CD4-positive, alpha-beta T cell (primary cell): ENCODE measurements at regions of chr12 and their contacts with region 1.

Region 1: GRCh38 chr12:68358532-68359485 is 26.6 kb upstream of the MDM1 start:
- DNase-seq: peak; percentile 36 to 84 (median 55)
- ATAC-seq: peak; percentile 92
- H3K4me3 ChIP-seq: no peak overlapping the region
- H3K4me3 Mint-ChIP-seq: no peak overlapping the region
- H3K27ac ChIP-seq: no peak overlapping the region
- H3K27ac Mint-ChIP-seq: peak overlapping the region; percentile 67
- H3K4me1 ChIP-seq: peaks cover 21% of the 10 kb centered on the region
- H3K4me1 Mint-ChIP-seq: peaks cover 29% of the 10 kb centered on the region
- H3K27me3 ChIP-seq: no peaks in the 10 kb centered on the region
- H3K27me3 Mint-ChIP-seq: no peaks in the 10 kb centered on the region
- CTCF ChIP-seq: peak; percentile 72

Region 2: DNA sequence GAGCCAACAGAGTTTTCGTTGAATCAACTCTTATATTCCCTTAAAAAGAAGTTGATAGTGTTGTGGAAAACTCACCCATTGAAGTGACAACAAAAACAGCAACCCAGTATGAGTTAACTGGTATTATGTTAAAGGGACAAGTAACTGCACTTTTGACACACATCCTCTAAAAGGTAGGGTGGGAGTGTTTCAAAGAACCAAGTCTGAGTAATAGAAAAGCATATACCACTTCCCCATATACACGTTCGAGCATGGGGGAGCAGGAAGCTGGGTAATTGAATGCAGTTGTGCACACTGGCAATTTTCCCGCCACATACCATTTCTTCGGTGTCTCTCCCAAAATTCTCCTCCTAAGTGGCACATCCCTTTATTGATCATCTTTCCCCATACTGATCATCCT is 338.1 kb before region 1 on chr12:
- CTCF ChIA-PET with region 1: no interaction called
- POLR2A ChIA-PET with region 1: no interaction called
- intact Hi-C with region 1: no loop called
- DNase-seq: no peak
- ATAC-seq: no peak
- H3K4me3 ChIP-seq: no peak overlapping the region
- H3K4me3 Mint-ChIP-seq: no peak overlapping the region
- H3K27ac ChIP-seq: no peak overlapping the region
- H3K27ac Mint-ChIP-seq: no peak overlapping the region
- H3K4me1 ChIP-seq: no peaks in the 10 kb centered on the region
- H3K4me1 Mint-ChIP-seq: no peaks in the 10 kb centered on the region
- H3K27me3 ChIP-seq: no peaks in the 10 kb centered on the region
- H3K27me3 Mint-ChIP-seq: no peaks in the 10 kb centered on the region
- CTCF ChIP-seq: no peak

Region 3: DNA sequence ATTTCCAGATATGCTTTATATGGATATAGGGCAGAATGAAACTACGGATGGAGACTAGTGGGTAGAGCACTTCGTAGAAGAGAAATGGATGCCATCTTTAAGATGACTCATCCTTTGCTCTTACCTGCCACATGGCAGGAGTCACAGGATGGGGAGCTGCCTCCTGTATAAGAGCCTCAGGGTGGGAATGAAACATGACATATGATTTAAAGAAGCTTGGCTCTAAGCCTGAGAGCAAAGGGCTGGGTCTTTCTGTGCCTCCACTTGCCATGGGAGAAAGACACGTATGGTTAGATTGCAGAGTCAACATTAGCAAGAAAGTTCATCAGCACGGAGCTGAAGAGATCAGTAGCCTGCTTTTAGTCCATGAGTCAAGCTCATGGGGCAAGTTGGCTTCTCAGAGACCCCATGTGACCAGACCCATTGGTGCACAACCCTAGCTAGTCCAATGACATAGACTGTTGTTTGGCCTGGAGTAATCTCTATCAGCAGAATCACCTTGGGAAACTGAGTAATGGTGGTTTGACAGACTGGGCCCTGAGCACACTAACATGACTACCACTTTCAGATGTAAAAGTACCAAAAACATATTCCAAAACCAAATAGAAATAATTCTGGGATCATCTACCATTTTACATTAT is 67.3 kb before region 1 on chr12:
- CTCF ChIA-PET with region 1: no interaction called
- POLR2A ChIA-PET with region 1: no interaction called
- intact Hi-C with region 1: no loop called
- DNase-seq: no peak
- ATAC-seq: no peak
- H3K4me3 ChIP-seq: no peak overlapping the region
- H3K4me3 Mint-ChIP-seq: no peak overlapping the region
- H3K27ac ChIP-seq: no peak overlapping the region
- H3K27ac Mint-ChIP-seq: no peak overlapping the region
- H3K4me1 ChIP-seq: peaks cover 4% of the 10 kb centered on the region
- H3K4me1 Mint-ChIP-seq: peaks cover 22% of the 10 kb centered on the region
- H3K27me3 ChIP-seq: no peaks in the 10 kb centered on the region
- H3K27me3 Mint-ChIP-seq: no peaks in the 10 kb centered on the region
- CTCF ChIP-seq: no peak

Region 4: GRCh38 chr12:68587448-68587873 is 228.7 kb after region 1 on chr12:
- CTCF ChIA-PET with region 1: no interaction called
- POLR2A ChIA-PET with region 1: no interaction called
- intact Hi-C with region 1: loop called in 1 of 2 experiments (anchors 5 kb)
- DNase-seq: peak in 7 of 14 experiments; percentile 8 to 71 (median 49)
- ATAC-seq: peak; percentile 65
- H3K4me3 ChIP-seq: no peak overlapping the region
- H3K4me3 Mint-ChIP-seq: peak overlapping the region; percentile 77
- H3K27ac ChIP-seq: no peak overlapping the region
- H3K27ac Mint-ChIP-seq: peak overlapping the region; percentile 81
- H3K4me1 ChIP-seq: peaks cover 34% of the 10 kb centered on the region
- H3K4me1 Mint-ChIP-seq: peaks cover 63% of the 10 kb centered on the region
- H3K27me3 ChIP-seq: no peaks in the 10 kb centered on the region
- H3K27me3 Mint-ChIP-seq: no peaks in the 10 kb centered on the region
- CTCF ChIP-seq: no peak

Region 5: GRCh38 chr12:68665016-68665569 is 306.3 kb after region 1 on chr12:
- CTCF ChIA-PET with region 1: no interaction called
- POLR2A ChIA-PET with region 1: interaction called, 3 read pairs
- intact Hi-C with region 1: loop called (anchors 5 to 10 kb)
- DNase-seq: no peak
- ATAC-seq: peak; percentile 27
- H3K4me3 ChIP-seq: no peak overlapping the region
- H3K4me3 Mint-ChIP-seq: no peak overlapping the region
- H3K27ac ChIP-seq: no peak overlapping the region
- H3K27ac Mint-ChIP-seq: peak overlapping the region; percentile 72
- H3K4me1 ChIP-seq: peaks cover 3% of the 10 kb centered on the region
- H3K4me1 Mint-ChIP-seq: peaks cover 34% of the 10 kb centered on the region
- H3K27me3 ChIP-seq: no peaks in the 10 kb centered on the region
- H3K27me3 Mint-ChIP-seq: no peaks in the 10 kb centered on the region
- CTCF ChIP-seq: no peak

Region 6: DNA sequence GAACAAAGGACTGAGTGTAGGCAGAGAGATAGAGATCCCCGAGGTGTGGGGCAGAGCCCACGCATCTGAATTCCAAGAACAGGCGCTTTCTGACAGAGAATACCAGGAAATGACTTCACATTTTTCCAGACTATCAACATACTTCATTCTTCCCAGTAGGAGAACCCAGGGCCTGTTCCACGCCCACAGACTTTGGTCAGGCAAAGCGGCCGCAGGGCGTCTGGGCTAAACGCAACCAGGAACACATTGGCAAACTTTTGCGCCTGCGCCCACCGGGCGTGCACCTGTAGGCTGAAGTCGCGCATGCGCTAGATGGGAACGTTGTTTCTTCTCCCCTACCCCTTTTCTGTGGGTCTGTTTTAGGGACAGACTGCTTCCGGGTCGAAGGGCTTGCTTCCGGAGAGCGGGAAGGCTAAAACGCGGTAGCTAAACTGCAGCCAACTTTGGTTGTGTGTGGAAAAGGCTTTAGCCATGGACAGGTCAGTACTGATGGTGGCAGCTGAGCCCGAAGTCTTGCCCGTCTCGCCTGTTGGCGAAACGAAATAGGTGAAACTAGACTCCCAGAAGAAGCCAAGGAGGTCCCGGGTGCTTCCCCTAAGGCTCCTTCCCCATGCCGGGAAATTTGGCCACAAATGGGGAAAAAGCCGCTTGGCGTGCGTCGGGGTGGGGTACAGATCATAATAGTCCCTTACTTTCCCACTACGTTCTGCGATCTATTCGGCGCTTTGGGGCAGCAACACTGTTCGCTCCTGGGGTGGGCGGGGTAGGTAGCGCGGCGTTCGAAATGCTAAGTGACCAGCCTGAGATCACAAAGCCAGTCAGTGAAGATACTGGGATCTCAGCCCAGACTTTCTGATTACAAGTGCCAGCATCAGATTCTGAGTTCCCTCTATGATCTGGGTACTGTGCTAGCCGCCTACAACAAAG is 328.0 kb after region 1 on chr12 and contains the start of gene NUP107:
- CTCF ChIA-PET with region 1: interaction called, 5 read pairs
- POLR2A ChIA-PET with region 1: interaction called, 3 read pairs
- intact Hi-C with region 1: loop called in 1 of 2 experiments (anchors 2 kb)
- DNase-seq: peak; percentile 94 to 99 (median 97)
- ATAC-seq: peak; percentile 94
- H3K4me3 ChIP-seq: peak within 1 kb of the TSS; percentile 82
- H3K4me3 Mint-ChIP-seq: peak within 1 kb of the TSS; percentile 100
- H3K27ac ChIP-seq: peak within 1 kb of the TSS; percentile 58 to 65
- H3K27ac Mint-ChIP-seq: peak within 1 kb of the TSS; percentile 98
- H3K4me1 ChIP-seq: peaks cover 11% of the 10 kb centered on the region
- H3K4me1 Mint-ChIP-seq: peaks cover 47% of the 10 kb centered on the region
- H3K27me3 ChIP-seq: no peaks in the 10 kb centered on the region
- H3K27me3 Mint-ChIP-seq: no peaks in the 10 kb centered on the region
- CTCF ChIP-seq: no peak
- total RNA-seq, gene NUP107: 37.2 to 38.7 TPM

Region 7: DNA sequence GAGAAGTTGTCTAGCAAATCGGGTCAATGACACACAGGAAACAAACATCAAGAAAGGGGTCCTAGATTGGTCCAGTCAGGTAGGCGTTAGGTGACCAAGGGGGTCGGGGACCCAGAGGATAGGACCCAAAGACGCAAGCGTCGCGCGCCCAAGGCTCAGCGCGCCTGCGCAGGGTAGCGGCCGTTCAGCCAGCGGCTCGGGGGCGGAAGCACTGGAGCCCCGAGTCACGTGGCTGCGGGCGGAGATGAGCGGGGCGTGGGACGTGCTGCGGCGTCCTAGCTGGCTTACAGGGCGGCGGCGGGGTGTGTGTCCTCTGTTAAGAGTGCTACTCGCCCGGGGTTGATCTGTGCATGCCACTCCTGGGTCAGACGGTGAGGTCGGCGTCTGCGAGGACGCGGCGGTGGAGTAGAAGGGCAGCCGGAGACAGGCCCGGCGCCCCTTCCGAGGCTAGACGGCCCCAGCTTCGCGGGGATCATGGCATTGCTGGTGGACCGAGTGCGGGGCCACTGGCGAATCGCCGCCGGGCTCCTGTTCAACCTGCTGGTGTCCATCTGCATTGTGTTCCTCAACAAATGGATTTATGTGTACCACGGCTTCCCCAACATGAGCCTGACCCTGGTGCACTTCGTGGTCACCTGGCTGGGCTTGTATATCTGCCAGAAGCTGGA is 387.2 kb after region 1 on chr12 and contains the start of gene SLC35E3:
- CTCF ChIA-PET with region 1: no interaction called
- POLR2A ChIA-PET with region 1: interaction called, 3 read pairs
- intact Hi-C with region 1: loop called in 1 of 2 experiments (anchors 5 kb)
- DNase-seq: peak; percentile 81 to 95 (median 88)
- ATAC-seq: peak; percentile 98
- H3K4me3 ChIP-seq: peak within 1 kb of the TSS; percentile 90
- H3K4me3 Mint-ChIP-seq: peak within 1 kb of the TSS; percentile 93
- H3K27ac ChIP-seq: peak within 1 kb of the TSS; percentile 22 to 73
- H3K27ac Mint-ChIP-seq: peak within 1 kb of the TSS; percentile 95
- H3K4me1 ChIP-seq: peaks cover 19% of the 10 kb centered on the region
- H3K4me1 Mint-ChIP-seq: peaks cover 47% of the 10 kb centered on the region
- H3K27me3 ChIP-seq: no peaks in the 10 kb centered on the region
- H3K27me3 Mint-ChIP-seq: no peaks in the 10 kb centered on the region
- CTCF ChIP-seq: no peak
- total RNA-seq, gene SLC35E3: 3.5 to 6.1 TPM

Region 8: DNA sequence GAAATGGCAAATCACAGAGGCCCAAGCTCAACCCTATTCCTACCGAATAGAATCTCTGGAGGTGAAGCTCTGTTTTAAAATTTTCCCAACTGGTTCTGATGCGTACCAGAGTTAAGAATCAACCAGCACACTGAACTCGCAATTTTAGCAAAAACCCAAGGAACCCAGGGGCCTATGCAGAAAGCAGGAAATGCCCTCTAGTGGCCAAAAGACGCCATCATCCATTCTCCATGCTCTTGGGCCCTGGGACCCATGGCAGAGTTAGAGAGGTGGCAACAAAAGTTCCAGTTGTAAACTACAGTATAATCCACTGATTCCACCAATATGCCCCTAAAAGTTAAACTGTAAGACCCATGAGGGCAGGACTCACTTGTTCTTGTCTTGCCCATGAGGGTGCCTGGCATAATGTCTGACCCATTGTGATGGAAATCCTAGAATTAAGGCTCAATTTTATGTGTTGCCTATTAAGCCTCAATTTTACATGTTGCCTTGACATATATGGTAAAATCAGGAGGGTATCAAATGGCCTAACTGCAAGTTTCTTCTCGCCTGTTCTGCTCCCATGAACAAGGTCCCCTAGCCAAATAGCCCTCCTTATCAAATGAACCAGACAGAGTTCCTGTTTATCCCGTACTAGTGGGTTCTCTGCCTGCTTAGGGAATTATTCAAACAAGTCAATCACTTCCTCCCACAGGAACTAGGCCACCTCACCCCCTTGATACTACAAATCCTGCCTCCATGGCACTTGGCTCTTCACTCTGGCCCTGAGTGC is 711.7 kb after region 1 on chr12:
- CTCF ChIA-PET with region 1: interaction called, 4 read pairs
- POLR2A ChIA-PET with region 1: no interaction called
- intact Hi-C with region 1: loop called (anchors 2 kb)
- DNase-seq: peak; percentile 23 to 74 (median 44)
- ATAC-seq: peak; percentile 71
- H3K4me3 ChIP-seq: no peak overlapping the region
- H3K4me3 Mint-ChIP-seq: no peak overlapping the region
- H3K27ac ChIP-seq: no peak overlapping the region
- H3K27ac Mint-ChIP-seq: no peak overlapping the region
- H3K4me1 ChIP-seq: no peaks in the 10 kb centered on the region
- H3K4me1 Mint-ChIP-seq: no peaks in the 10 kb centered on the region
- H3K27me3 ChIP-seq: peaks cover 0 to 4% of the 10 kb centered on the region in 2 experiments
- H3K27me3 Mint-ChIP-seq: peaks cover 20% of the 10 kb centered on the region
- CTCF ChIP-seq: peak; percentile 85